Posterior vena cava (tissue), 2 donors: ENCODE measurements at regions of chr17 and their contacts with region 1.

Region 1: DNA sequence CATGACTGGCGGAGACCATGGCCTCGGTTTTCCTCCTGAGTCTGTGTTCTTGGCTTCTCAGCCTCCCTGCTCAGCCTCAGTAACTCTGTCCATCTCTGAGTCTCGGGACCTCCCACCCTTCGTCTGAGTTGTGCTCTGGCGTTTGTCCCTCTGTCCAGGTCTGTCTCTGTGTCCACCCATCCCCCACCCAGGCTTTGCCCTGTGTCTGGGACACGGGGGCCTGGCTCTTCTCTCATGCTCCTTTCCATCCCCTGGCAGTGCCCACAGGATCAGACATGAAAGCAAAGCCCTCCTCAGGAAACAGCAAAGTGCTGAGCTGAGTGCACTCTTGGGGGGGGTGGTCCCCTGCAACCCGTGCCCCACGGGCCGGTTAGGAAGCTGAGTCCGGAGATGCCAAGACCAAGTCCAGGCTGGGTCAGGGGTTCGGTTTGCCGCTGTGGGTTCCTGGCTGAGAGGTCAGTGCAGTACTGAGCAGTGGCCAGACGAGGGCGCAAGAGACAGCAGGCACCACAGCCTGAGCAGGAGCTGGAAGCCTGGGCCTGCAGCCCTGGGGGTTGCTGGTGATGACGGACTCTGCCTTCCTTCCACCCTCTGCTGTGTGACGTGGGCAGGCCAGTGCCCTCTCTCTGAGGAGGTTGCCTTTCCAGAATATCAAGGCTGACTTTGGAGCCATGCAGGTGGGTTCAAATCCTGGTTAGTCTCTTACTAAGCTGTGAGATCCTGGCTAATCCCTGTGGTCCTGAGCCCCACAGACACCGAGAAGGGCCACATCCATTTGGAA is 2.5 kb downstream of the P2RX1 start:
- DNase-seq: peak; percentile 94

Region 2: DNA sequence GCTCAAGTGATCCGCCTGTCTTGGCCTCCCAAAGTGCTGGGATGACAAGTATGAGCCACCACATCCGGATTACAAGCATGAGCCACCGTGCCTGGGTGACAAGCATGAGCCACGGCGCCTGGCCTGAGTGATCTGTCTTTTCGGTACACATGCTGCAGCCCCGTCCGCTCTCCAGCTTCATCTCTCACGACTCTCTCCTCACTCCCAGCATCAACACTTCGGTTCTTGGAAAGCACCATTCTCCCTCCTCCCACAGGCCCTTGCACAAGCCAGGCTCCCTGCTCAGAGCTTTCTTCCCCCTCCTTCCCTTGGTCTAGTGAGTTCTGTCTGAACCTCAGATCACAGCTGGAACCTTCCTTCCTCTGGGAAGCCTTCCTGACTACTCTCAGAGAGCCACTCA is 61.2 kb before region 1 on chr17:
- intact Hi-C with region 1: loop called in 1 of 2 experiments (anchors 2 kb)
- DNase-seq: peak; percentile 54